GM23248 (cell line): ENCODE measurements at regions of chr12 and their contacts with region 1.

Region 1: DNA sequence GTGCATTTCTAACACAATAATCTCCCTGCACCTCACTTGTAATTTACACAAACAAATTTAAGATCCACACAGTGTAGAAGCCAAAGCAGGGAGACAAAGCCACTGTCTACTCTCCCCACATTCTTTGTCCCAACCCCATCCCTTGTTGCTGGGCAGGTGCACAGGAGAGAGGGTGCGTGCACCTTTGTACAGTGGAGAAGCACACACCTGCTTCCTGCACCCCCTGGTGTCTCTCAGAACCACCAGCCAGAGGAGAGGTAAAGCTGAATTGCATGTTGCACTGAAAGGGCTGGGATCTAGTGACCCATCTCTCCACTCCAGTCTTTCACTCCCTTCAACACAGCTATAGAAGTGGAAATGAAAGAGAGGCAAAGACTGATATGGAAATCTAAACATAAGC is 51.4 kb upstream of the IFNG-AS1 start:
- DNase-seq: no peak
- H3K4me3 ChIP-seq: no peak overlapping the region
- H3K27ac ChIP-seq: no peak overlapping the region
- H3K4me1 ChIP-seq: peaks cover 13% of the 10 kb centered on the region
- H3K27me3 ChIP-seq: no peaks in the 10 kb centered on the region

Region 2: DNA sequence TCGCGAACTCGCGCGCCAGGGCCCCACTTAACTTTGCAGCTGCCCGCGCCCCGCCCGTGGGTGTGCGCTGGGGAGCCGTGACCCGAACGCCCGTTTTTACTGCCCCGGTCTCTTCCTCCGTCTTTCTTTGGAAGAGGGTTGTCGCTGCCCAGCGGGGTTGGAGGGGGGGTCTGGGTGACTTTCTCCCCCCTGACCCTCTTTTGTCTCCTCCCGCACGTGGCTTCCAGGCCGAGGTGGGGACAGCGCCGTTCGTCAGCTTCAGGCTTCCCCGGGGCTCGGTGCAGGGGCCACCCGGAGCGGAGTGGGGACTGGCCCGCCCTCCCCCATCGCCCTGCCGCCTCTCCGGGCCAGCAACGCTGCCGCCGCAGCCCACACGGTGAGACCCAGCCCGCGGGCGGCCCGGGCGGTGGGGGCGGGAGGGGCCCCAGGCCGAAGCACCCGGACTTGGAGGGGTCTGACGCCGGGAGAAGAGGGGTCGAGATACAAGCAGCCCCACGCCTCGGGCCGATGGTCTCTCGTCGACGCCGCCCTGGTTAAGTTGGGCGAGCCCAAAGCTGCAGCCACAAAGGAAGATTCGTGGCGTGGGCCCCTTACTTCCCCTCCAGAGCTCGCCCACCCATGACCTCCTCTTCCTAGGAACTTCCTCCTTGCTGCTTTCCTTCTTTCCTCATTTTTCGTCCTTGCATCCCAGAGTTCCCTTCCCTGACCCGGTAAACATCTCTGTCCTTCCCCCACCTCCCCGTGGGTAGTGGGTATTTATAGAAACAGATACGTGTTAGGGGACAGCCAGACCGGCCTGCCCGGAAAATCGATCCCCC is 288.1 kb before region 1 on chr12:
- in situ Hi-C with region 1: loop called (anchors 10 kb)
- DNase-seq: peak; percentile 58
- H3K4me3 ChIP-seq: peak overlapping the region; percentile 88
- H3K27ac ChIP-seq: peak overlapping the region; percentile 81
- H3K4me1 ChIP-seq: peaks cover 38% of the 10 kb centered on the region
- H3K27me3 ChIP-seq: no peaks in the 10 kb centered on the region